OCI-LY7 (cell line): ENCODE measurements at regions of chr13 and their contacts with region 1.

Region 1: DNA sequence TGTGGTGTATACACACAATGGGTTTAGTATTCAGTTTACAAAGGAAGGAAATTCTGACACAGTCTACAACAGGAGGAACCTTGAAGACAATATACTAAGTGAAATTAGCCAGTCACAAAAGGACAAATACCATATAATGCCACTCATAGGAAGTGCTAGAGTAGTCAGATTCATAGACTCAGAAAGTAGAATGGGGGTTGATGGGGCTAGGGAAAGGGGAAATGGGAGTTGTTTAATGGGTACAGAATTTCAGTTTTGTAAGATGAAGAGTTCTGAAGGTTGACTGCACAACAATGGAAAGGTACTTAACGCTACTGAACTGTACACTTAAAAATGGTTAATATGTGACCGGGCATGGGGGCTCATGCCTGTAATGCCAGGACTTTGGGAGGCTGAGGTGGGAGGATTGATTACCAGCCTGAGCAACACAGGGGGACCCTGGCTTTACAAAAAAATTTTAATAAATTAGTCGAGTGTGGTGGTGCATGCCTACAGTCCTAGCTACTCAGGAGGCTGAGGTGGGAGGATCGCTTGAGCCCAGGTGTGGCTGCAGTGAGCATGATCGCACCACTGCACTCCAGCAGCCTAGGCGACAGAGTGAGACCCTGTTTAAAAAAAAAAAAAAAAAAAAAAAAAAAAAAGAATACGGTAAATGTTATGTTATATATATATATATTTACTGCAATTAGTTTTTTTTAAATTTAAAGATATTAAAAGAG is 45.0 kb downstream of the SLC15A1 start:
- DNase-seq: peak; percentile 76
- H3K4me3 ChIP-seq: no peak overlapping the region
- H3K27ac ChIP-seq: peak overlapping the region; percentile 92
- H3K4me1 ChIP-seq: peaks cover 28% of the 10 kb centered on the region
- CTCF ChIP-seq: no peak

Region 2: DNA sequence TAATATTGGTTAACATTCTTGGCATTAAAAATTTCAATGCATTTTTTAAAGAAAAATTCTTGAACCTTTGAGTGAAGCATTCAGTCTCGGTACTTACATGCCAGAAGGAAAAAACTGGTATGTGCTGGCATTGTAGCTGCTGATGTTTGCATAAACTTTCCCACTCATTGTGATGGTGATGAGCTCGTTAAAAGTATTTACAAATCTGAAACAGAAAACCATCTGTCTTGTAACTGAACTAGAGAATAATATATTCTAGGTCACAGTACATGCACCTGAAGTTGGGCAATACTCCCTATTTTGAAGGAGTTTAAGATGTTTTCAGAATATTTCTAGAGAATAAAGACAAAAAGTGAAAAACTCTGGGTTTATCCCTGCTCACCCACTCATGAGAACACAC is 19.1 kb before region 1 on chr13:
- CTCF ChIA-PET with region 1: no interaction called
- POLR2A ChIA-PET with region 1: interaction called, 10 read pairs
- intact Hi-C with region 1: no loop called
- DNase-seq: no peak
- H3K4me3 ChIP-seq: no peak overlapping the region
- H3K27ac ChIP-seq: no peak overlapping the region
- H3K4me1 ChIP-seq: no peaks in the 10 kb centered on the region
- CTCF ChIP-seq: no peak

Region 3: GRCh38 chr13:100680131-100680530 is 1972.7 kb after region 1 on chr13:
- CTCF ChIA-PET with region 1: no interaction called
- POLR2A ChIA-PET with region 1: no interaction called
- intact Hi-C with region 1: no loop called
- DNase-seq: no peak
- H3K4me3 ChIP-seq: no peak overlapping the region
- H3K27ac ChIP-seq: no peak overlapping the region
- H3K4me1 ChIP-seq: no peaks in the 10 kb centered on the region
- CTCF ChIP-seq: no peak